Activated naive CD4-positive, alpha-beta T cell treated with anti-CD3 and anti-CD28 coated beads for 36 hours (primary cell): ENCODE measurements at regions of chr14 and their contacts with region 1.

Region 1: DNA sequence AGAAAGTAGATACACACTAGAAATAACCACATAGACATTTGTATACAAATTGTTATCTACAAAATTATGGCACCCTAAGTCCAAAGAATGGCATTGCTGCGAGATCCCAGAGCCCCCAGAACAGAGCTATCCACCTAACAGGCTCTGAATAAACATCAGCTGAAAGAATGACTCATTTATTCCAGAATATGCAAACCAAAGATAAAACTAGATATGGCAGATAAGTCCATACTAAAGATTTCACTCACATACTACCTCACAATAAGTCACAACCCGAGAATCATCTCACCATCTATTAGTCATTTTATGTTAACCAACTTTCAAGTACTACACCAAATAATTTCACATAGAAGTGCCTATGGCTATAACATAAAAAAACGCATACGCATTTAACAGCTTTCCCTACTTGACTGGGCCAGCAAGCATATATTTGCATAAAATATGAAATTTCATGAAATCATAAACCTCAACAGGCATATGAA is 5.6 kb downstream of the CNIH1 start:
- DNase-seq: peak; percentile 16
- H3K4me3 Mint-ChIP-seq: peak overlapping the region; percentile 3
- H3K27ac Mint-ChIP-seq: peak overlapping the region; percentile 80
- H3K4me1 Mint-ChIP-seq: peaks cover 81% of the 10 kb centered on the region
- H3K27me3 Mint-ChIP-seq: no peaks in the 10 kb centered on the region

Region 2: GRCh38 chr14:54312140-54312801 is 123.3 kb before region 1 on chr14:
- CTCF ChIA-PET with region 1: no interaction called
- intact Hi-C with region 1: no loop called
- DNase-seq: no peak
- H3K4me3 Mint-ChIP-seq: no peak overlapping the region
- H3K27ac Mint-ChIP-seq: no peak overlapping the region
- H3K4me1 Mint-ChIP-seq: no peaks in the 10 kb centered on the region
- H3K27me3 Mint-ChIP-seq: peaks cover 11% of the 10 kb centered on the region

Region 3: GRCh38 chr14:54374117-54374884 is 61.2 kb before region 1 on chr14:
- CTCF ChIA-PET with region 1: no interaction called
- intact Hi-C with region 1: no loop called
- DNase-seq: no peak
- H3K4me3 Mint-ChIP-seq: no peak overlapping the region
- H3K27ac Mint-ChIP-seq: no peak overlapping the region
- H3K4me1 Mint-ChIP-seq: no peaks in the 10 kb centered on the region
- H3K27me3 Mint-ChIP-seq: peaks cover 7% of the 10 kb centered on the region

Region 4: GRCh38 chr14:54509546-54510501 is 74.3 kb after region 1 on chr14 and contains the start of gene CGRRF1:
- CTCF ChIA-PET with region 1: no interaction called
- intact Hi-C with region 1: loop called (anchors 1 kb)
- DNase-seq: peak; percentile 98
- H3K4me3 Mint-ChIP-seq: peak within 1 kb of the TSS; percentile 86
- H3K27ac Mint-ChIP-seq: peak within 1 kb of the TSS; percentile 52
- H3K4me1 Mint-ChIP-seq: peaks cover 41% of the 10 kb centered on the region
- H3K27me3 Mint-ChIP-seq: no peaks in the 10 kb centered on the region
- total RNA-seq, gene CGRRF1: 9.2 to 9.7 TPM

Region 5: DNA sequence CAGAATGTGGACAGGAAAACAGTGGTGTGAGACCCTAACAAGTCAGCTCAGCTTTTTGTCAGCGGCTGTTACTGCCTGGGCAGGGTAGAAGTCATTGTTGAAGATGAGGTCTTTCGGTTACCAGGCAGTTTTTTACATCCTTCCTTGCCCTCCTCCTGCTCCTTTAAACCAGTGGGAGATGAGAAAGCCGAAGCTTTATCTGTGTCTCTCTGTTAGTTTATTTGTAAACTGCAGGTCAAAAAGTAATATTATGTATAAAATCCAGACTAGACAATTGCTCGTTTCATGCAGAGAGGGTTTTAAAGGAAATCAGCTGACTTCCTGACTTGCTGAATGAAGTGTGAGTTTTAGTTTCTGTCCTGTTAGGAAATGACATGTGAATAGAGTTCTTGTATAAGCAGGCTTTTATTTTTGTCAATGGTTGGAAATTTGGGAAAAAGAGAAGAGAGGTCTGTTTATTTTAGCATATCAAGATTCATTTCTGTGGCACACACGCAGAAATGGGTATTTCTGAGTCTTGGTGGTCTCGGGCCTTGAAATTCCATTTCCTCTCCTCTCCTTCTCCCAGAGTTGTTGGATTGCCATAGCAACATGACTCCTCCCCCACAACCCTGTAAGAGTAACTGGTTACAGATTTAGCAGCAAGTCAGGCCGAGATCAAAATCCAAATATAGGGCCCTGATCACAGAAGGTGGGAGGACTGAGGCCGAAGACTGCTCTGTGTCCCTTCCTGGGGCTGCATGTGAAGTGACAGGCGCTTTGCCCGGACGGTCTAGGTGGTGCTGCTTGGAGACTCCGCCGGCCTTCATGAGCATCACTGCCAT is 192.2 kb after region 1 on chr14:
- CTCF ChIA-PET with region 1: no interaction called
- intact Hi-C with region 1: loop called (anchors 5 kb)
- DNase-seq: peak; percentile 62
- H3K4me3 Mint-ChIP-seq: peak overlapping the region; percentile 61
- H3K27ac Mint-ChIP-seq: peak overlapping the region; percentile 86
- H3K4me1 Mint-ChIP-seq: peaks cover 57% of the 10 kb centered on the region
- H3K27me3 Mint-ChIP-seq: no peaks in the 10 kb centered on the region

Region 6: DNA sequence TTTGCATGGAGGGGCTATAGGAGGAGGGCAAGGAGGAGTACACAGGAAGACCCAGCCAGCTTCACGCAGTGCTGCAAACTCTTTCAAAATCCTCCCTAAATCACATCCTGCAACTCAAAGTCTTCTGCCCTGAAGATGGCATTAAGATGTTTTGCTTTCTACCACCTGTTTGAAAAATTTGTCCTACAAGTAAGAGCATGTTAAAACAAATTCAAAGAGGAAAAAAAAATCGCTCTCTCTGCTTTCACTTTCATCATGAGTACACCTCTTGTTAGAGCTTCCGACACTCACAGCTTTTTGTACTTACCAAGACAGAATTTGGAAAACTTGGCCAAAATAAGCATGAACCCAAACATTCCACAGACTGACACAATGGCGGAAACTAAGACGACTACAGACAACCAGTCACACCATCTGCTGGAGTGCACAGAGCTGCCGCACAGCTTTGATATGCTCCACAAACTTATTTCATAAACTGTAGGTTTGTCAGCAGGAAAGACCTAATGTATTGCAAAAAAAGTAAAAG is 445.8 kb after region 1 on chr14:
- CTCF ChIA-PET with region 1: no interaction called
- intact Hi-C with region 1: loop called (anchors 5 kb)
- DNase-seq: peak; percentile 38
- H3K4me3 Mint-ChIP-seq: peak overlapping the region; percentile 78
- H3K27ac Mint-ChIP-seq: peak overlapping the region; percentile 96
- H3K4me1 Mint-ChIP-seq: peaks cover 34% of the 10 kb centered on the region
- H3K27me3 Mint-ChIP-seq: no peaks in the 10 kb centered on the region